ENCODE measurements at regions of chr1 and their contacts with region 1.

Region 1: DNA sequence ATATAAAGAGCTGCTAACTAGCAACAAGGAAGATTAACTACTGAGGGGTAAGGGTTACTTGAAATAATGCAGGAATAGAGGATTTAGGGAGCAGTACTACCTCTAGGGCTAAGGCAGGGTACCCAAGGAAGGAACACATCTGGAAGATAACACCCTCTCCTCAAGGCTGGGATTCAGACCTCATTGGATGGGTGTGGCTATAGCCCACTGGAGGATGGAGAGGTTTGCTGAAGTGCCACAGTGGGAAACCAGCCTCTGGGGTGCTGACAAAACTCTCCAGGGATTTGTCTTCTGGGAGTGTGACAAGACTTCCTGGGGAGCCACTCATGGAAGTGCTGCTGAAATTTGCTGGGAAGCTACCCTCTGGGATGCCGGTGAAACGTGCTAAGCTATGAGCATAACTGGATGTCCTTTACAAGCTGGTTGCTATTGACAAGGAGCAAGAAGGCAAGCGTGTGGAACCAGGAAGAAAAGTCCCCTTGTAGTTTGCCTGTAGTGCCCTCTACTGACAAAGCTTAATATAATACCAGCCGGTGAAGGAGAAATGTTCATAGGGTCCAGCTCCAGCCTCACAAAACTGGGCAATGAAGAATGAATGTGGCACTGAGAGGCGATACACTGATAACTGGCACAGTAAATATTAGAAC is 122.8 kb upstream of the USP24 start:
- DNase-seq: peak; percentile 19
- ATAC-seq: peak; percentile 93
- H3K4me3 Mint-ChIP-seq: no peak overlapping the region
- H3K27ac Mint-ChIP-seq: no peak overlapping the region
- H3K4me1 Mint-ChIP-seq: peaks cover 4% of the 10 kb centered on the region; the same call in 1 of the 2 replicates
- H3K27me3 Mint-ChIP-seq: no peaks in the 10 kb centered on the region; the same call in 1 of the 2 replicates
- CTCF ChIP-seq: peak; percentile 29; the same call in 1 of the 2 replicates

Region 2: GRCh38 chr1:55143685-55144084 is 194.2 kb before region 1 on chr1:
- CTCF ChIA-PET with region 1: interaction called, 20 read pairs
- POLR2A ChIA-PET with region 1: no interaction called
- DNase-seq: peak; percentile 47
- ATAC-seq: peak; percentile 100
- H3K4me3 Mint-ChIP-seq: no peak overlapping the region
- H3K27ac Mint-ChIP-seq: 0 out of 2 replicates have a peak overlapping the region, but pooled peaks have one; percentile 11
- H3K4me1 Mint-ChIP-seq: no peaks in the 10 kb centered on the region
- H3K27me3 Mint-ChIP-seq: no peaks in the 10 kb centered on the region
- CTCF ChIP-seq: no peak

Region 3: GRCh38 chr1:55252987-55253589 is 84.8 kb before region 1 on chr1:
- CTCF ChIA-PET with region 1: no interaction called
- POLR2A ChIA-PET with region 1: no interaction called
- DNase-seq: no peak
- ATAC-seq: no peak
- H3K4me3 Mint-ChIP-seq: no peak overlapping the region
- H3K27ac Mint-ChIP-seq: no peak overlapping the region
- H3K4me1 Mint-ChIP-seq: no peaks in the 10 kb centered on the region
- H3K27me3 Mint-ChIP-seq: no peaks in the 10 kb centered on the region; the same call in 1 of the 2 replicates
- CTCF ChIP-seq: no peak

Region 4: DNA sequence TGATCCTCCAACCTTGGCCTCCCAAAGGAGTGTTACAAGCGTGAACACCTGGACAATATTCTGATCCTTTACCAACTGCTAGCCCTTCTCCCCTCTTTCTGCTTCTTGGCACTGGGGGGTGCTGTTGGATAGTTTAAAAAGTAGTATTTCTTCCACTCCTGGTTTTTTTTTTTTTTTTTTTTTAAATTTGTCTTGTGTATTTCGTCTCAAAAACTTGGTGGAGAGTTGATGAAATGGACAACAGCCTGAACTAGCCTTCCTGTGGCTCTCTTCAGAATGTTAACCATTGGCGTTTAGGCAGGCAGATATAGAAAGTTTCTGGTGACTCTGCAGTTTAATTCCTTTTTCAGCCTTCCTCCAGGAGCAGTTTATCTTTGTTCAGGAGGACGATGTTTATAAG is 53.1 kb before region 1 on chr1:
- CTCF ChIA-PET with region 1: interaction called, 26 read pairs
- POLR2A ChIA-PET with region 1: no interaction called
- DNase-seq: no peak
- ATAC-seq: no peak
- H3K4me3 Mint-ChIP-seq: no peak overlapping the region
- H3K27ac Mint-ChIP-seq: no peak overlapping the region
- H3K4me1 Mint-ChIP-seq: peaks cover 14% of the 10 kb centered on the region
- H3K27me3 Mint-ChIP-seq: no peaks in the 10 kb centered on the region; the same call in 1 of the 2 replicates
- CTCF ChIP-seq: no peak

Region 5: DNA sequence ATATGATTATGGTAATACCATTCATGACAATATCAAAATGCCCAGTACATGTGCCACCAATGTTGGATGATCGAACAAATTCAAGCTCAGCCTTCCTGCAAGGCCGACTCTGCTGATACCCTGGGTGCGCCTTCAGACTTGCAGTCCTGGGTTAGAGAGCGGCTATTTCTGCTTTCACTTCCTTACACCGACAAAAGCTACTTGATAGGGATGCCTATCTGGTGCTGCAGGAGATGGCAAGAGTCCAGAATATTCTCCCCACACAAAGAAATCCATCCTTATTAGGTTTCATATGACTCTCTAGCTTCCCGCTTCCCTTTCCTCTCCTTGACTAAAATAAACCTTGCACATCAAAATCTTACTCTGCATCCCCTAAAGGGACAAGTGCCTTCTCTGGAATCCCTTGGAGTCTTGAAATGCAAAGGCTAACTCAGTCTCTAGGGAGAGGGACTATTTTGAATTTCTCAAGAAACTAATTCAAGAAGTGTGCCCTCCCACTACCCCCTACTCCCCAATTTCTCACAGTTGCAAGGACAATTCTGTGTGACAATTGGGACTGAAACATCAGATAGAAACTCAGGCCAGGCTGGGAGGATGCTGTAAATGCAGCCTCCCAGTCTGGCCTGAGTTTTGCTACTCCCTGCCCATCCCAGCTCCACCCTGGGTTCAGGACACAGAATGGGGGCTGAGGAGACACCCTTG is 19.7 kb before region 1 on chr1:
- CTCF ChIA-PET with region 1: interaction called, 15 read pairs
- POLR2A ChIA-PET with region 1: no interaction called
- DNase-seq: no peak
- ATAC-seq: no peak
- H3K4me3 Mint-ChIP-seq: no peak overlapping the region
- H3K27ac Mint-ChIP-seq: no peak overlapping the region
- H3K4me1 Mint-ChIP-seq: peaks cover 13% of the 10 kb centered on the region
- H3K27me3 Mint-ChIP-seq: 0 out of 2 replicates have a peak, but pooled peaks cover 3% of the 10 kb centered on the region
- CTCF ChIP-seq: no peak

Region 6: GRCh38 chr1:55323760-55324159 is 14.2 kb before region 1 on chr1:
- CTCF ChIA-PET with region 1: interaction called, 18 read pairs
- POLR2A ChIA-PET with region 1: no interaction called
- DNase-seq: no peak
- ATAC-seq: peak; percentile 91
- H3K4me3 Mint-ChIP-seq: no peak overlapping the region
- H3K27ac Mint-ChIP-seq: no peak overlapping the region
- H3K4me1 Mint-ChIP-seq: peaks cover 43% of the 10 kb centered on the region
- H3K27me3 Mint-ChIP-seq: peaks cover 15% of the 10 kb centered on the region
- CTCF ChIP-seq: no peak

Region 7: GRCh38 chr1:55500601-55501000 is 162.7 kb after region 1 on chr1:
- CTCF ChIA-PET with region 1: no interaction called
- POLR2A ChIA-PET with region 1: no interaction called
- DNase-seq: no peak
- ATAC-seq: no peak
- H3K4me3 Mint-ChIP-seq: no peak overlapping the region
- H3K27ac Mint-ChIP-seq: no peak overlapping the region
- H3K4me1 Mint-ChIP-seq: no peaks in the 10 kb centered on the region
- H3K27me3 Mint-ChIP-seq: no peaks in the 10 kb centered on the region; the same call in 1 of the 2 replicates
- CTCF ChIP-seq: no peak